HepG2 (cell line): ENCODE measurements at regions of chr2 and their contacts with region 1.

Region 1: DNA sequence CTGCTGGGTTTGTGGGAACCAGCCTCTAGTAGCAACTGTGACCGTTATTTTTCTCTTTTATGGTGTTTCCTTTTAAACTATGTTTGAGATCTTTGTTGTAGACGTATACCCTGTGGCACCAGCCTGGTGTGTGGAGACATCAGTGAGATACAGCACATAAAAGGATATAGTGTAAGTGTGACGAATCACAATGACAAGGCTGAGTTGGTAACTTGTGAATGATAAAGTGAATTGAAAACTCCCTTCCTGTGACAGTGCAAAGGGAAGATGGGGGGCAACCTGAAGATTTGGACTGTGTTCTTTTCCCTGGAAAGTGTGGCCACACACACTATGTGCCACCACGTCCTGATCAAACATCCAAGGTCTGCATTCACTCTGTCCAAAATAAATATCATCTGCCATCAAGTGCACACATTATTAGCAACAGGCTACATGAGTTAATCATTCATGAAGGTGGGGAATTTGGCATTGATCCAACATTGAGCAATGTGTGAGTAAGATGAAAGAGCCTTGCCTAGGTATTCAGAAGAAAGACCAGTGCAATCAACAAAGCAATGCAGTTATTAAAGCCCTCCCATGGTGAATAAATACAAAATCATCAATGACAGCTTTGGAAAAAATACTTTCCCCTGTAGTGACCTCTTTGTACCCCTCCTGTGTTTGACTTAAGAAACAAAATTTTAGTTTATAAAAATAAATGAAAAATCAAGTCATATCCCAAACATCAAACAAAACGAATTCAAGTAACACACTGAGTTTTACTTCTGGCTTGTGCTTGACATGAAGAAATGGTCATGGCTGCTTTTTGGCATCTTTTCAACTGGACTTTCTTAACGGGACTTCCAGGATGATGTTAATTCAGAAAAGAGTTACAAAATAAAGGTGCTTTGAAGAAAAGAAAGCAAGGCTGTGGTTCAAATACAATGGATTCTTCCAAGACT is 1280.5 kb upstream of the ZEB2 start:
- DNase-seq: peak; percentile 100
- ATAC-seq: peak; percentile 99
- H3K4me3 ChIP-seq: peak overlapping the region in 1 of 3 experiments; percentile 10; a peak in 1 of 6 replicates
- H3K27ac ChIP-seq: peak overlapping the region; percentile 89
- H3K4me1 ChIP-seq: peaks cover 52% of the 10 kb centered on the region
- H3K27me3 ChIP-seq: no peaks in the 10 kb centered on the region
- CTCF ChIP-seq: peak; percentile 25; the same call in 1 of the 2 replicates
- EP300 ChIP-seq: peak in 1 of 2 experiments; percentile 100; a peak in 3 of 4 replicates
- POLR2A ChIP-seq: no peak
- RAD21 ChIP-seq: no peak

Region 2: GRCh38 chr2:145752091-145752806 is 48.2 kb before region 1 on chr2:
- CTCF ChIA-PET with region 1: no interaction called
- POLR2A ChIA-PET with region 1: no interaction called
- in situ Hi-C with region 1: no loop called
- intact Hi-C with region 1: loop called (anchors 1 kb)
- DNase-seq: peak; percentile 93
- ATAC-seq: peak; percentile 75
- H3K4me3 ChIP-seq: no peak overlapping the region
- H3K27ac ChIP-seq: peak overlapping the region; percentile 78
- H3K4me1 ChIP-seq: peaks cover 63% of the 10 kb centered on the region
- H3K27me3 ChIP-seq: no peaks in the 10 kb centered on the region
- CTCF ChIP-seq: peak; percentile 88
- EP300 ChIP-seq: peak in 1 of 2 experiments; percentile 44; a peak in 1 of 4 replicates
- POLR2A ChIP-seq: no peak
- RAD21 ChIP-seq: peak; percentile 83

Region 3: DNA sequence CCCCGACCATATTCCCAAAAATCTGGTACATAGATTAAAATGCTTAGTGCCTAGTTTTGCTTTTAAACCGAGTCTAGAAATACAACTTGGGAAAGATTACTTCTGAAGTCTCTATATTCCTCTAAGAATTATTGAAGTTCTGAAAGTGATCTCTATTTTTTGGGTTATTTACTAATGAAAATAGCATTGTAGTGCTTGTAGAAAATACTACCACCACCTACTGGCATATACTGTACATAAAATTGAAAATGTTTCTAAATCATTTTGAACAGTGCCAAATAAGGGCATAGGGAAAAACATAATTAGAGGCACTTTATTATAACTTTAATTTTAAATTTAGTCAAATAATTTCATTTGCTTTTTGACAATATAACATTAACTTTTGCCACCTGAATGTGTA is 119.1 kb after region 1 on chr2:
- CTCF ChIA-PET with region 1: no interaction called
- POLR2A ChIA-PET with region 1: no interaction called
- in situ Hi-C with region 1: no loop called
- intact Hi-C with region 1: loop called (anchors 5 kb)
- DNase-seq: no peak
- ATAC-seq: no peak
- H3K4me3 ChIP-seq: no peak overlapping the region
- H3K27ac ChIP-seq: no peak overlapping the region
- H3K4me1 ChIP-seq: peaks cover 8% of the 10 kb centered on the region
- H3K27me3 ChIP-seq: no peaks in the 10 kb centered on the region
- CTCF ChIP-seq: peak; percentile 41
- EP300 ChIP-seq: no peak
- POLR2A ChIP-seq: no peak
- RAD21 ChIP-seq: peak; percentile 22; the same call in 1 of the 2 replicates